ENCODE measurements at regions of chr18 and their contacts with region 1.

Region 1: GRCh38 chr18:11733031-11733430 is 44.0 kb downstream of the GNAL start:
- DNase-seq: peak; percentile 53 to 94 (median 77)
- ATAC-seq: peak; percentile 94 to 100 (median 98)
- H3K4me3 ChIP-seq: peak overlapping the region in 1 of 4 donors; percentile 22
- H3K27ac ChIP-seq: no peak overlapping the region
- H3K4me1 ChIP-seq: no peaks in the 10 kb centered on the region
- H3K27me3 ChIP-seq: peaks cover 0 to 2% (median 0%) of the 10 kb centered on the region in 4 donors
- CTCF ChIP-seq: peak; percentile 85 to 98 (median 90)

Region 2: DNA sequence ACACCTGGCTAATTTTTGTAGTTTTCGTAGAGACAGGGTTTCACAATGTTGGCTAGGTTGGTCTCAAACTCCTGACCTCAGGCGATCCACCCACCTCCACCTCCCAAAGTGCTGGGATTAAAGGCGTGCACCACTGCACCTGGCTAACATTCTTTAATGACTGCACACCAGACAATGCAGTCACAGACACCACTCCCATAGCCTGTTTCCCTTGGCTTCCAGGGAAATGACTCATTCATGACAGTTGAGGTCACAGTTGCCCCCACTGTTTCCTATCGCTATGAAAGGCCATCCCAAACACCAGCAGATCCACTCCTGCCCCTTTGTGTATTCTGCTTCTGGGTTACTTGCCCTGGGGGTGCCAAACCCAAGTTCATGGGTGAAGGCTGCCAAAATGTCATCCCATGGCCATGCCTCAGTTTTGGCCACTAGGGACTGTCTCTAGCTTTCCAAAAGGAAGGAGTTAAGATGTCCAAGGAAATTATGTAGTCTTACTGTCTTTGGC is 126.9 kb after region 1 on chr18:
- intact Hi-C with region 1: loop called in 1 of 3 experiments (anchors 10 kb)
- DNase-seq: no peak
- ATAC-seq: peak in 2 of 4 donors; percentile 13 to 37
- H3K4me3 ChIP-seq: no peak overlapping the region
- H3K27ac ChIP-seq: no peak overlapping the region
- H3K4me1 ChIP-seq: no peaks in the 10 kb centered on the region
- H3K27me3 ChIP-seq: no peaks in the 10 kb centered on the region
- CTCF ChIP-seq: no peak

Region 3: GRCh38 chr18:11883153-11883552 is 150.1 kb after region 1 on chr18:
- intact Hi-C with region 1: loop called in 1 of 3 experiments (anchors 10 kb)
- DNase-seq: no peak
- ATAC-seq: peak in 2 of 4 donors; percentile 40 to 45
- H3K4me3 ChIP-seq: no peak overlapping the region
- H3K27ac ChIP-seq: no peak overlapping the region
- H3K4me1 ChIP-seq: no peaks in the 10 kb centered on the region
- H3K27me3 ChIP-seq: no peaks in the 10 kb centered on the region
- CTCF ChIP-seq: no peak

Region 4: GRCh38 chr18:12038639-12039417 is 305.8 kb after region 1 on chr18:
- intact Hi-C with region 1: loop called in 1 of 3 experiments (anchors 5 kb)
- DNase-seq: peak; percentile 74 to 94 (median 88)
- ATAC-seq: peak; percentile 71 to 90 (median 85)
- H3K4me3 ChIP-seq: peak overlapping the region; percentile 14 to 47 (median 40)
- H3K27ac ChIP-seq: peak overlapping the region in 2 of 4 donors; percentile 40 to 66
- H3K4me1 ChIP-seq: peaks cover 14 to 30% (median 24%) of the 10 kb centered on the region in 3 donors
- H3K27me3 ChIP-seq: no peaks in the 10 kb centered on the region
- CTCF ChIP-seq: peak; percentile 98 to 99 (median 99)

Region 5: GRCh38 chr18:12121175-12122042 is 388.4 kb after region 1 on chr18:
- intact Hi-C with region 1: no loop called
- DNase-seq: peak in 2 of 6 donors; percentile 22 to 29
- ATAC-seq: peak in 3 of 4 donors; percentile 49 to 74 (median 69)
- H3K4me3 ChIP-seq: no peak overlapping the region
- H3K27ac ChIP-seq: no peak overlapping the region
- H3K4me1 ChIP-seq: peaks cover 0 to 3% (median 0%) of the 10 kb centered on the region in 3 donors
- H3K27me3 ChIP-seq: no peaks in the 10 kb centered on the region
- CTCF ChIP-seq: peak in 2 of 4 donors; percentile 8 to 22